ENCODE measurements at regions of chr4 and their contacts with region 1.

Region 1: DNA sequence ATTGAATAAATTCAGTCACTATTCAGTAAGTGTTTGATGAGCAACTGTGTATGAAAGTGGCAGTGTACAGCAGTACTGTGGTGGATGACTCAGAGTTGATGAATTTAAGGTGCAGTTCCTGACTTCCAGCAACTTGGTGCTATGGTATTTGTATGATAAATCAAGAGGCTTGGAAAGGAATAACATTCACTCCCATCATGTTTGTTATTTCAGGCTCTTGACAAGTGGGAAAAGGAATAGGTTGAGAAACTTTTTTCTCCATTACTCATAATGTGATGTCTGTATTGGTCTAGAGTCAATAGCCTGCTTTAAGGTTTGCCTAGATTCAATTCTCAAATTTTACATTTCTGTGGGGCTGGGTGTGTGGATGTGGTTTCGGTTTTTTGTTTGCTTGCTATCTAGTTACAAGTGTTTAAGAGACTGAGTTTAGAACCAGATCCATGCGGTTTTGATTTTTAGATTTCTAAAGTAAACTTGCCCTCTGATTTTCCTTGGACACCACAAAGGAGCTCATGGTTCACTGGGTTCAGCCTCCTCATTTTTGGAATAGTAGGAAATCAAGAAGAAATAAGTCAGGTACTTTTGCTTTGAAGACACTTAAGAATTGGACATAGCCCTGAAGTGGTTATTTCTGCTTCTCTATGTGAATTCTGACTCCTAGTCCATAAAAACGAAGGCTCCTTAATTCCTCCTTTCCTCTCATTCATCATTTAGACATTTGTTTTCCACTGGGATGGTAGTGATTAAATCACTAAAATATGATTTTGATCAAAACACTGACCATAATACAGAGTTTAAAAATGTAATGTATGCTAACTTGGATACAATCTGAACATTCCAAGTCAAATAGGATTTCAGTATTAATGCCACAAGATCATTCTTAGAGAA is 34.9 kb upstream of the CYP2U1 start:
- DNase-seq: no peak
- H3K4me3 ChIP-seq: no peak overlapping the region
- H3K27ac ChIP-seq: no peak overlapping the region
- H3K4me1 ChIP-seq: peaks cover 4% of the 10 kb centered on the region
- H3K27me3 ChIP-seq: no peaks in the 10 kb centered on the region
- CTCF ChIP-seq: no peak

Region 2: GRCh38 chr4:107824353-107825071 is 71.9 kb before region 1 on chr4 and contains the start of gene SGMS2:
- CTCF ChIA-PET with region 1: interaction called, 3 read pairs
- POLR2A ChIA-PET with region 1: no interaction called
- intact Hi-C with region 1: loop called (anchors 5 kb)
- DNase-seq: peak; percentile 86
- H3K4me3 ChIP-seq: peak within 1 kb of the TSS; percentile 68
- H3K27ac ChIP-seq: no peak within 1 kb of the TSS
- H3K4me1 ChIP-seq: no peaks in the 10 kb centered on the region
- H3K27me3 ChIP-seq: no peaks in the 10 kb centered on the region
- CTCF ChIP-seq: no peak
- total RNA-seq, gene SGMS2: 3.9 and 4.3 TPM in 2 replicates

Region 3: DNA sequence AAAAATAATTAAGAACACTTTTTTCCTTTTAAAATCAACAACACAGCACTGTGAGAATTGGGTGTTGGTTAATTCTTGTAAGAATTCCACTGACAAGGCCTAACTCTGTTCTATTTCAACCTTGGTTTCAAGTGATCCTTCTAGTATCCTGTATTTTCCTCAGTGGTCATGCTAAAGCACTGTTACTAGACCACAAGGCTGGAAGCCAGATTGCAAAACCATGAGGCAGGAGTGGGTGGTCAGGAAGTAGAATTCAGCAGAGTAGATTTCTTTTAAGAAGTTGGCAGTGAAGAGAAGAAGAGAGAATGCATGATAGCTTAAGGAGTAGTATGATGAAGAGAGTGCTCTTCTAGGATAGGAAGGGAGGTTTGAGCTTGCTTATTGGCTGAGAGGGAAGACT is 344.0 kb after region 1 on chr4:
- CTCF ChIA-PET with region 1: no interaction called
- POLR2A ChIA-PET with region 1: no interaction called
- intact Hi-C with region 1: no loop called
- DNase-seq: no peak
- H3K4me3 ChIP-seq: no peak overlapping the region
- H3K27ac ChIP-seq: no peak overlapping the region
- H3K4me1 ChIP-seq: no peaks in the 10 kb centered on the region
- H3K27me3 ChIP-seq: no peaks in the 10 kb centered on the region
- CTCF ChIP-seq: no peak